Activated naive CD4-positive, alpha-beta T cell treated with anti-CD3 and anti-CD28 coated beads, Interleukin-2, amount 10 ng/mL, durations not matched to agents 7 days and 5 days (primary cell): ENCODE measurements at regions of chr11 and their contacts with region 1.

Region 1: GRCh38 chr11:82867495-82868082 is 32.6 kb downstream of the PRCP start:
- DNase-seq: peak; percentile 83
- H3K4me3 Mint-ChIP-seq: no peak overlapping the region
- H3K27ac Mint-ChIP-seq: no peak overlapping the region
- H3K4me1 Mint-ChIP-seq: peaks cover 13% of the 10 kb centered on the region
- H3K27me3 Mint-ChIP-seq: peaks cover 9% of the 10 kb centered on the region

Region 2: GRCh38 chr11:82718307-82718706 is 149.3 kb before region 1 on chr11:
- CTCF ChIA-PET with region 1: interaction called, 23 read pairs
- DNase-seq: peak; percentile 43
- H3K4me3 Mint-ChIP-seq: no peak overlapping the region
- H3K27ac Mint-ChIP-seq: no peak overlapping the region
- H3K4me1 Mint-ChIP-seq: no peaks in the 10 kb centered on the region
- H3K27me3 Mint-ChIP-seq: peaks cover 4% of the 10 kb centered on the region

Region 3: DNA sequence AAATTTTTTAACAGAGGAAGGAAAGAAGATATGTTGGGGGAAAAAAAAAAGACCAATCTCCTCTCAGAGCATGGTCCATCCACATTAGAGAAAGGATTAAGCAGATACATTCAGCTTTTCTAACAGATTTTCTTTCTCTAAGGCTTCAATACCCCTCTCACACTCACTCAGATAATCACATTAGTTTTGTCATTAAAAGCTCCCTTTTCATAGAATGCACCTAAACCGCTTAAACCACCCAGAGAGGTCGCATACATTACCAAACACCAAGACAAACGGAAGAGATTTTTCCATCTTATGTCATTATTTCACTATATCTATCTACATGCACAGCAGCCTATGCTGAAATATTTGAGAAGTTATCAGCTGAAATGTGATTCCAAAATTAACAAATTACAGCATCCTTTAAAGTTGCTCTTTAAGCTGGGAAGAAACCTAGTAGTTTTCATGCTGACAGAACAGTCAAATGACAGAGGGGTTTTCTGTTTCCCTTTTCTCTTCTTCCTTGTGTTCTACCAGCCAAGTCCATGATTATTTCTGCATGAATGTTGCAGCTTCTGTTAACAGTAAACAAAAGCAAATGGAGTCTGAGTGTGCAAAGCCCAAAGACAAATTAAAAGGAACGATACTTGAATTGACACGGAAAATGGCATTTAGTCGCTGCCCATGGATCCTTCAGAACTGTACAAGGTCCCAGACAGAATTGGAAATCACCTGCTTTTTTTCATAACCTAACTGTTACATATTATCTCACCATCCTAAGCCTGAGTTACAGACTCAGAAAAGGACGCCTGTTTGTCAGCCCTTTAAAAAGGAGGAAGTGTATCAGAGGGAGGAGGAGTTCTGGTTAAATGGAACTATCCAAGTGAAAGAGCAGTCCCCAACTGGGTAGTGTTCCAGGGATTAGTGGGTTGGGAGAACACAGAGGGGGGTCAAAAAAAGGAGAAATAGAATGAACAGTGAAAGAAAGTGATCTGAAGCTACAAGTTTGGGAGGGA is 21.9 kb before region 1 on chr11:
- CTCF ChIA-PET with region 1: interaction called, 16 read pairs
- DNase-seq: no peak
- H3K4me3 Mint-ChIP-seq: no peak overlapping the region
- H3K27ac Mint-ChIP-seq: no peak overlapping the region
- H3K4me1 Mint-ChIP-seq: no peaks in the 10 kb centered on the region
- H3K27me3 Mint-ChIP-seq: no peaks in the 10 kb centered on the region

Region 4: DNA sequence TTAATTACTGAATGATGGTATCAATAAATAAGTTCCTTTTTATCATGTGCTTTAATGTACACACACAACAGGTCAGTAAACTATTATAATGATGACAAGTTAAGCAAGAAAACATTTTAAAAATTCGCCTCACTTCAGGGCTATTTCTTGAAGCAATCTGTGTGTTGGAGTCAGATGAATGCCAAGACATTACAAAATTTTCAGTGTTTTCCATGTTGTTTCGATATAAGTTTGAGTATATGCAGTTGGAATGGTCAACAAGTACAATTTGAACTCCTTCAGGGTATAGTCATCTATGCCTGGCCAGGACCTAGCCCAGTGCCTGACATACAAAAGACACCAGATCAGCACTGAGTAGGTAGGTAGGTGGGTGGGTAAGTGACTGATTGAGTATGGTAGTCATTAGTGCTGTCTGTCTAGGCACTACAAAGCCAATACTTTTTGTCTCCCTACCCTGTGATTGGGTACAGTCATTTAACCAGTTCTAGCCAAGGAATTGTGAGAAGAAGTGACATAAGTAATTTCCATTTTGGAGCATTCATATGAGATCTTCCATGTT is 25.1 kb after region 1 on chr11:
- CTCF ChIA-PET with region 1: interaction called, 14 read pairs
- DNase-seq: no peak
- H3K4me3 Mint-ChIP-seq: no peak overlapping the region
- H3K27ac Mint-ChIP-seq: no peak overlapping the region
- H3K4me1 Mint-ChIP-seq: peaks cover 13% of the 10 kb centered on the region
- H3K27me3 Mint-ChIP-seq: no peaks in the 10 kb centered on the region

Region 5: DNA sequence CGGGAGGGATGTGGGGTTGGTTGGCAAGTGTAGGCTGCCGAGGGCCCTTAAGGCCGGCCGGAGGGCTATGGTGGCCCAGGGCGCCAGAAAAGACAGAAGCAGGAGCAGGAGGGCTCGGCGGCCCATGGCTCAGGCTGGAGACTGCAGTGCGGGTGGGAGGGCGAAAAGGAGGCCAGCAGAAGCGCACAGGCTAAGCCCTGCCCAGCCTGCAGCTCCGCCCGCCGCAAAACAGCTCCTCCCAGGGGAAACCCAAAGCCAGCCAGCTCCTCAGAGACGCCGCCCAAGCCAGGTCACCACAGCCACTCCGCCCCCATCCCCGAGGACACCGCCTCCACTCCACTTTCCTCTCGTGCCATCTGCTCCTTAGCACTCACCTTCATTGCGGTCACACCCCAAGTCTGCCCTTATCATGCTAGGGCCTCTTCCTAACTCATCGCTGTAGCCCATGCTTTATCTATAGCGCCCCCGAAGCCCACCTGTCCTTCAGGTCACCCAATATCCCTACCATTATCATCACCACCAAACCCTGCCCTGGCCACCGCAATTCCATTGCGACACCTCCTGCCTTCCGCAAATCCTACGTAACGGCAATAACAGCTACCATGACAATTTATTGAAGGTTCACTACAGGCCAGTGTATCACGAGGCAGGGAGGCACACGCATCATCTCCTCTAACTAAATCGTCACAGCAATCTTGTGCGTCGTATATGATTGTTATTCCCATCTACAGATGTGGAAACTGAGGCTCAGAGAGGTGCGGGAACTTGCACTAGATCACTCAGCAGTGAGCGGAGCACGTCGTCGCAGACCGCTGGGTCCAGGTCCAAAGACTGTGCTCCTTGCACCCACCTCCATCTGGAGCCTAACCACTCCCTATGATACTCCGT is 32.9 kb after region 1 on chr11 and contains the start of gene PRCP:
- CTCF ChIA-PET with region 1: interaction called, 33 read pairs
- DNase-seq: peak; percentile 96
- H3K4me3 Mint-ChIP-seq: peak within 1 kb of the TSS; percentile 90
- H3K27ac Mint-ChIP-seq: peak within 1 kb of the TSS; percentile 96
- H3K4me1 Mint-ChIP-seq: peaks cover 51% of the 10 kb centered on the region
- H3K27me3 Mint-ChIP-seq: no peaks in the 10 kb centered on the region

Region 6: GRCh38 chr11:83249972-83250593 is 382.5 kb after region 1 on chr11:
- CTCF ChIA-PET with region 1: interaction called, 42 read pairs
- DNase-seq: no peak
- H3K4me3 Mint-ChIP-seq: no peak overlapping the region
- H3K27ac Mint-ChIP-seq: no peak overlapping the region
- H3K4me1 Mint-ChIP-seq: peaks cover 7% of the 10 kb centered on the region
- H3K27me3 Mint-ChIP-seq: no peaks in the 10 kb centered on the region

Region 7: GRCh38 chr11:83819933-83820549 is 952.5 kb after region 1 on chr11:
- CTCF ChIA-PET with region 1: interaction called, 12 read pairs
- DNase-seq: no peak
- H3K4me3 Mint-ChIP-seq: no peak overlapping the region
- H3K27ac Mint-ChIP-seq: no peak overlapping the region
- H3K4me1 Mint-ChIP-seq: no peaks in the 10 kb centered on the region
- H3K27me3 Mint-ChIP-seq: no peaks in the 10 kb centered on the region

Region 8: GRCh38 chr11:83865636-83866461 is 998.3 kb after region 1 on chr11:
- CTCF ChIA-PET with region 1: no interaction called
- DNase-seq: no peak
- H3K4me3 Mint-ChIP-seq: no peak overlapping the region
- H3K27ac Mint-ChIP-seq: no peak overlapping the region
- H3K4me1 Mint-ChIP-seq: no peaks in the 10 kb centered on the region
- H3K27me3 Mint-ChIP-seq: no peaks in the 10 kb centered on the region